ENCODE measurements at regions of chr5 and their contacts with region 1.

Region 1: DNA sequence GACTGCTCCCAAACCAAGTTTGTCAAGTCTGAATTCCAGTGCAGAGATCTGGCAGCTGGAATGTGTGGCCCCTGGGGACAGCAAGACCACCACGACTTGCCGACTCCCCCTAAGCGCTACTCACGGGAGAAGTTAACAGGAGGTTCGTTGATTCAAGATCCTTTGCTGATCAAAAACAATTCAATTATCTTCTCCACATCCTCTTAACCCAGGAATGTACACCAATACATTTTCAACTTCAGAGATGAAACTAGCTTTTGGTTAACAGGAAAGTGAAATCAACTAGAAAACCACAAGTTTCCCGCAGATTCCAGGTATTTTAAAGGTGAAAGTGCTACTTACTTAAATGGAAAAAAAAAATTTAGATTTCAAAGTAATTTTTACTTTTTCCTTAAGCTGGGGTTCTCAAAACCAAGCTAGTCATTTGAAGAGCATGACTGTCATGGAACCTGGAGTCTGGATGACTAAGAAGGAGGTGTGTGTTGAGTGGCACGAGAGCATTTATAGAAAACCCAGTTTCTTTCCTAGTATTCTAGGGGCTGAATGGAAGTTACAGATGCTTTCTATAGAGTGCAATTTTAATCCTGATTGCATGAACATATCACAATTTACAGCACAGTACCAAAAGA is 257.5 kb upstream of the PANK3 start:
- DNase-seq: peak; percentile 53
- ATAC-seq: peak; percentile 85
- H3K4me3 Mint-ChIP-seq: peak overlapping the region; percentile 55
- H3K27ac Mint-ChIP-seq: peak overlapping the region; percentile 89
- H3K4me1 Mint-ChIP-seq: peaks cover 32% of the 10 kb centered on the region
- H3K27me3 Mint-ChIP-seq: peaks cover 8% of the 10 kb centered on the region
- CTCF ChIP-seq: no peak

Region 2: DNA sequence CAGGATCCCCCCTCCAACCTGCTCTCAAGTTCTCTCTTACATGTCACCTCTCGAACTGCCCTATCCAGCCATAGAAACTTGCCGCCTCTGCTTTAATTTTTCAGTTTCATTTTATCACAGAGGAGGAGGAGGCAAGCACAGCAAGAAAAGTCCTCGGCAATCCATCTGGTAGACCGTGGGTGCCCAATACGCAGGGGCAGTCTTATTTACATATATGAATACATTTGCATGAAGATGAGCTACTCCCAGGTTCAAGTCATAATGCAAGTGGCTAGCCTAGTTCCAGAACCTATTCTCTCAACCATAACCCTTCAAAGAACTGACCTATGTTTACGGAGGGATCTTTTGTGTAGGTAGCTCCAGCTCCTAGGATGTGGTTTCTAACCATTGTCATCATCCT is 34.4 kb before region 1 on chr5:
- CTCF ChIA-PET with region 1: interaction called, 4 read pairs
- POLR2A ChIA-PET with region 1: interaction called, 3 read pairs
- intact Hi-C with region 1: loop called (anchors 5 kb)
- DNase-seq: peak; percentile 61
- ATAC-seq: peak; percentile 67
- H3K4me3 Mint-ChIP-seq: peak overlapping the region; percentile 32
- H3K27ac Mint-ChIP-seq: peak overlapping the region; percentile 83
- H3K4me1 Mint-ChIP-seq: peaks cover 30% of the 10 kb centered on the region
- H3K27me3 Mint-ChIP-seq: peaks cover 10% of the 10 kb centered on the region
- CTCF ChIP-seq: no peak

Measured in activated CD8-positive, alpha-beta T cell treated with anti-CD3 and anti-CD28 coated beads for 36 hours (primary cell).